Activated T-helper 1 cell treated with anti-CD3 and anti-CD28 coated beads, Interleukin-12 subunit alpha, Interleukin-12 subunit beta, Interleukin-2, Interleukin-4 antibody, amounts not matched to agents 30 ng/mL and 10 ng/mL and 1 ng/mL, durations not matched to agents 14 hours and 24 hours and 36 hours (primary cell): ENCODE measurements at regions of chr7 and their contacts with region 1.

Region 1: GRCh38 chr7:53325106-53325505 is 289.7 kb downstream of the POM121L12 start:
- DNase-seq: no peak
- H3K4me3 Mint-ChIP-seq: no peak overlapping the region
- H3K27ac Mint-ChIP-seq: no peak overlapping the region
- H3K4me1 Mint-ChIP-seq: no peaks in the 10 kb centered on the region
- H3K27me3 Mint-ChIP-seq: no peaks in the 10 kb centered on the region

Region 2: GRCh38 chr7:53272081-53272480 is 53.0 kb before region 1 on chr7:
- intact Hi-C with region 1: loop called (anchors 10 kb)
- DNase-seq: no peak
- H3K4me3 Mint-ChIP-seq: no peak overlapping the region
- H3K27ac Mint-ChIP-seq: no peak overlapping the region
- H3K4me1 Mint-ChIP-seq: no peaks in the 10 kb centered on the region
- H3K27me3 Mint-ChIP-seq: no peaks in the 10 kb centered on the region

Region 3: GRCh38 chr7:53397911-53398310 is 72.8 kb after region 1 on chr7:
- intact Hi-C with region 1: loop called (anchors 10 kb)
- DNase-seq: no peak
- H3K4me3 Mint-ChIP-seq: no peak overlapping the region
- H3K27ac Mint-ChIP-seq: no peak overlapping the region
- H3K4me1 Mint-ChIP-seq: no peaks in the 10 kb centered on the region
- H3K27me3 Mint-ChIP-seq: no peaks in the 10 kb centered on the region

Region 4: GRCh38 chr7:53907745-53908144 is 582.6 kb after region 1 on chr7:
- intact Hi-C with region 1: no loop called
- DNase-seq: no peak
- H3K4me3 Mint-ChIP-seq: no peak overlapping the region
- H3K27ac Mint-ChIP-seq: no peak overlapping the region
- H3K4me1 Mint-ChIP-seq: no peaks in the 10 kb centered on the region
- H3K27me3 Mint-ChIP-seq: no peaks in the 10 kb centered on the region